ENCODE measurements at regions of chr14 and their contacts with region 1.

Region 1: DNA sequence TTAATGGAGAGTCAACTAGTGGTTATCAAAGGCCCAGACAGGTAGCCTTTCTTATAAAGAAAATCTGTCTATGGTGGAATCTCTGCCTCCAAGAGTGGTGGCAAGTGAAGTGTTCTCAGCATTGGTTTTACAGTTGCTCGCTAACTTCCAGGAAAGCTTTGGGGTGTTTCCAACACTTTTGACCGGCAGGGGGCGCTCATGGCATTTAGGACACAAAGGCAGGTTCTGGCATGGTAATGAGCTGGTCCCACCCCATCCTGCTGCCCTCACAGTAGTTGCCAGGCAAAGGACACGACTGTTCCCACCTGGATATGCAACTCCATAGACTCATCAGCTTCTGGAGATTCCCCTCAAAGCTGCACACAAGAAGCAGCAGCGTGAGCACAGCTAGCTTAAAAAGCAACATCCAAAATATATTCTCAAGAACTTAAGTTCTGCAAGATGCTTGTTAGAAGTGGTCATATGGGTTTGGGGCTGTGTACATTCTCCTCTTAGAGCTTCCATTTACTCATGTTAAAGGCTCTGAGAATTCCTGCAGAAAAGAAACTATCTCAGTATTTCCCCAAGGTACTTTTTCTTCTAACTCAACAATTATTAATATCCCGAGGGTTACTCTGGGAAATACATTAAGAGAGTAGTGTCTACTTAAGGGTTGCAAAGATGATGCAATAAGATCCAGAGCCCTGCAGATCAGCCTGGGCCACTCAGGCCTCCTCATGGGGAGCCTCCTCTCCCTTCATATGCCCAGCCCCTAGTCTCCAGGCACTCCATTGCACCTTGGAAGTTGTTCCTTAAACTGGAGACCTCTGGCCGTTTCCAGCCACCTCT is 14.8 kb downstream of the PROX2 start:
- DNase-seq: peak; percentile 83
- H3K4me3 ChIP-seq: no peak overlapping the region
- H3K27ac ChIP-seq: no peak overlapping the region
- H3K4me1 ChIP-seq: no peaks in the 10 kb centered on the region
- H3K27me3 ChIP-seq: no peaks in the 10 kb centered on the region
- CTCF ChIP-seq: peak; percentile 85 to 86
- POLR2A ChIP-seq: no peak

Region 2: DNA sequence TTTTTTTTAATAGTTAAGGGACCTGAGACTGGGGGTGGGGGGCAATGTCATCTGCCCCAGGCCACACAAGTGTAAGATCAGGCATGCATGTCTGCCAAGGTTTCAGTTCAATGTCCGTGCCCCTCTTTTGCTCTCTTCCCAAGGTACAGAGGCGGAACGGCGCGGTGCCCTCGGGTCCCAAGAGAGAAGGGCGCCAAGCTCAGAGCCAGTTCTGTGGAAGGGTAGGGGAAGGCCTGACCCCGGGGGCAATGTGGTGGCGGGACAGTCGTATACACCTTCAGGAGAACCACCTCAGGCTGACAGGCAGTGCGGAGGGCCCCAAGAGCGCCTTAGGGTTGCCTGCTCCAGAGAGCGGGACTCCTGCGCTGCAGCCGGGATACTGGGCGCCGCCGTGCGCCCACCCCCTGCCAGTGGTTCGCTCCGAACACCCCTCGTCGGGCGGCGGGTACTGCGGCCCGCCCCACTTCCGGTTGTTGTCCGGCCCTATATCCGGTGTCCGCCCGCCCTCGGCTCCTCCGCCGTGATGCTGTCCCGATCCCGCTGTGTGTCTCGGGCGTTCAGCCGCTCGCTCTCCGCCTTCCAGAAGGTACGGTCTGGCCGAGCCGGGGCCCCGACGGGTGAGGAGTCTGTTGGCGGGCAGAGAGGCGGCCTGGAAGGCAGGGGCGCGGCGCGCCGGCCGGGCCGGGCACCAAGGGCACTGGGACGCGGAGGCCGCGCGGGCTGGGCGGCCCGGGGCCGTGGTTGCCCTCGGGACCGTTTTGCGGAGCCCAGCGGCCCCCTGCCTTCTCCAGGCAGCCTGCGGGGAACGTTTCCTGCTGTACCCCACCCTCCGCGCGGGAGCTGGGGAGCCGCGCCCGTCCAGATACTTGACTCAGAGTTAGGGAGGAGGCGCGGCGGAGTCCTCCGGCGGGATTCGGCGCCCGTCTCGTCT is 20.6 kb after region 1 on chr14 and contains the start of gene DLST:
- CTCF ChIA-PET with region 1: interaction called, 245 read pairs
- POLR2A ChIA-PET with region 1: interaction called, 8 read pairs
- dilution Hi-C with region 1: no loop called
- intact Hi-C with region 1: loop called (anchors 1 kb)
- DNase-seq: peak; percentile 87
- H3K4me3 ChIP-seq: peak within 1 kb of the TSS; percentile 49 to 95 (median 93)
- H3K27ac ChIP-seq: peak within 1 kb of the TSS; percentile 74
- H3K4me1 ChIP-seq: peaks cover 24% of the 10 kb centered on the region
- H3K27me3 ChIP-seq: no peaks in the 10 kb centered on the region
- CTCF ChIP-seq: no peak
- POLR2A ChIP-seq: peak; percentile 96
- total RNA-seq, gene DLST: 105 and 110 TPM in 2 replicates

Region 3: DNA sequence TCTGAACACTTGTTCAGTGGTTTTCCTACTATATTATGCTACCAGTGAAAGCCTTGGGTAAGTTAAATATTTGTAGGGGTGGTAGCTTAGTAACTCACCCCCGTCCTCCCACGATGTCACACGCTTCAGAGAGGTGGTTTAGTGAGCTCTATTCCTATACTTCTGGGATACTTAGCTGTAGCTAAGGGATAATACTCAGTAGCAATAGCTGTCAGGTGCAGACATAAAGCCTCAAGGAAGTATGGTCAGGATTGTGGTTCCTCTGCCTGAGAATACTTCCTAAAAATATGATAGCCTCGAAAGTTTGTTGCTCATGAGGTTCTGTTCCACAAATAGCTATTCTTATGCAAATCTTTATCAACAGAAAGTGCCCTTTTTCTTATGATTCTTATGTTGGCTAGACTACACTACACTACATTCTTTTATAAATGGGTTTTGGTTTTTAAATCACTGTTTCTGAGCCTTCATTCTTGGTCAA is 32.5 kb after region 1 on chr14:
- CTCF ChIA-PET with region 1: interaction called, 61 read pairs
- POLR2A ChIA-PET with region 1: no interaction called
- dilution Hi-C with region 1: no loop called
- intact Hi-C with region 1: no loop called
- DNase-seq: no peak
- H3K4me3 ChIP-seq: no peak overlapping the region
- H3K27ac ChIP-seq: no peak overlapping the region
- H3K4me1 ChIP-seq: no peaks in the 10 kb centered on the region
- H3K27me3 ChIP-seq: no peaks in the 10 kb centered on the region
- CTCF ChIP-seq: no peak
- POLR2A ChIP-seq: no peak

Region 4: GRCh38 chr14:74938531-74939495 is 77.7 kb after region 1 on chr14:
- CTCF ChIA-PET with region 1: interaction called, 16 read pairs
- POLR2A ChIA-PET with region 1: no interaction called
- dilution Hi-C with region 1: no loop called
- intact Hi-C with region 1: no loop called
- DNase-seq: no peak
- H3K4me3 ChIP-seq: no peak overlapping the region
- H3K27ac ChIP-seq: no peak overlapping the region
- H3K4me1 ChIP-seq: peaks cover 38% of the 10 kb centered on the region
- H3K27me3 ChIP-seq: no peaks in the 10 kb centered on the region
- CTCF ChIP-seq: no peak
- POLR2A ChIP-seq: no peak

Measured in endothelial cell of umbilical vein (primary cell).